ENCODE measurements at regions of chr19 and their contacts with region 1.

Region 1: DNA sequence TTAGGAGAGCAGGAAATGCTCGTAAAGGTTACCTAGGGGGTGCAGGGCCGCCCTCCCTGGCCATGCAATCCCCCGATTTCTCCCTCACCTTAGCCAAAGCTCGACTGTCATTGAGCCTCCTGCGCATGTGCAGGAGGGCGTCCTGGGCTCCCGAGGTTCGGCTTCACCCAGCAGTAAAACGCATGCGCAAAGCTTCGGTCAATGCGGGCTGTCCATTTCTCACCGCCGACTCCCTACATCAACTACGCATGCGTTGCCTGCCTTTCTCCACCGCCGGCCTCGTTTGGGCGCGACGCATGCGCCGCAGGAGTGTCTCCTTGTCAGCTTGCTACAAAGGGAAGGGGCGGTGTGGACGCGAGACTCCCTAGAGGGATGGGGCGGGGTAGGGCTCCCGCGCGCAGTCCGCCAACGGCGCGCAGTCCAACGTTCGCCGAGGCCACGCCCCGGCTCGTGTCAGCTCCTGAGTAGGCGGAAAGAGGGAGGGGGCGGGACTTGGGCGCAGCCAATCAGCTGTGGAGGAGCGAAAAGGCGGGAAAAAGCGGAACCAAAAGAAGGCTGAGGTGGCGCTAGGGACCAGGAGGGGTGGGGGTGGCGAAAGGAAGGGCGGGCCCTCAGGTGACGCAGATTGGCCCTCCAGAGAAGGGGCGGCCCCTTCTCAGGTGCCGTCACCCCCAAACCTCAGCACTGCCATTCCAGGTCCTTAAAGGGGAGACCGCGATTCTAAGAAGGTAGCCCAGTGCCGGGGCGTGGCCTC is at the starts of genes SYNGR4 and TMEM143:
- DNase-seq: peak; percentile 96 to 100 (median 98)
- ATAC-seq: peak; percentile 88
- H3K4me3 ChIP-seq: peak within 1 kb of the TSS; percentile 82 to 90
- H3K4me3 Mint-ChIP-seq: peak within 1 kb of the TSS; percentile 83
- H3K27ac ChIP-seq: peak within 1 kb of the TSS; percentile 64 to 89
- H3K27ac Mint-ChIP-seq: peak within 1 kb of the TSS; percentile 86
- H3K4me1 ChIP-seq: peaks cover 17% of the 10 kb centered on the region
- H3K4me1 Mint-ChIP-seq: peaks cover 19% of the 10 kb centered on the region
- H3K27me3 ChIP-seq: no peaks in the 10 kb centered on the region
- H3K27me3 Mint-ChIP-seq: no peaks in the 10 kb centered on the region
- CTCF ChIP-seq: no peak
- total RNA-seq, gene SYNGR4: not detected
- total RNA-seq, gene TMEM143: 6.4 to 7.7 TPM

Region 2: DNA sequence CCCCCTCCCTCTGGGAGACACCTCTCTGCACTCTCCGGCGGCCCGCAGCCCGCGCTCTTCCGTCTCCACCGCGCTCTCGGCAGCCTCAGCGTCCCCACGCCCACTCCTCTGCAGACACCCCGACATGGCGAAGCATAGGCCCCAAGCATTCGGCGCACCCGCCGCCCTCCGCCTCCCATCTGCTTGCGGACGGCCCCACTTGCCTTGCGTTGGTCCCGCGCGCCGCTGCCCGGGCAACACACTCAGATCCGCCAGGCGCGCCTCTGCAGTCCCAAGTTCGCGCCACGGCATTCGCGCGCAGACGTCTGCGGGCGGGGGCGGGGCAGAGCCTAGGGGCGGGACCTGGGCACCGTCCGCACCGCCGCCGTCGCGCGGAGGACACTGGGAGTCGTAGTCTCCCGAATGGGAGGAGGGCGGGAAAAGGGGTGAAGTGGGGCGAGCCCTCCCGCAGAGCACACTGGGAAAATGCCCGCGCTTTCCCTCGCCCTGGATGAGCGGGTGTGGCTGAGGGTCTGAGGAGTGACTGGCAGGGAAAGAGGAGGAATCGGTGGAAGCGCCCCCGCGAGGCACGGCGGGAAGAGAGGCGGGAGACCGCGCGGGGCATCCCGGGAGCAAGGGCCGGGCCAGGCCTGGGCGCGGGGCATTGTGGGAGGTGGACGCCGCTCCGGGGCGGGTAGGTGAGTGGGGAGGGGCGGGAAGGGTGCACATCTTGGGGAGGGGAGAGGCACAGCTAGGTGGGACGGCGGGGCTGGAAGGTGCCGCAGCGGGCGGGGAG is 193.8 kb before region 1 on chr19 and contains the starts of genes LIG1 and ZSWIM9:
- CTCF ChIA-PET with region 1: no interaction called
- POLR2A ChIA-PET with region 1: no interaction called
- intact Hi-C with region 1: loop called in 1 of 2 experiments (anchors 1 kb)
- DNase-seq: peak; percentile 82 to 95 (median 90)
- ATAC-seq: peak; percentile 81
- H3K4me3 ChIP-seq: peak within 1 kb of the TSS; percentile 96 to 100
- H3K4me3 Mint-ChIP-seq: peak within 1 kb of the TSS; percentile 98
- H3K27ac ChIP-seq: peak within 1 kb of the TSS; percentile 82 to 92
- H3K27ac Mint-ChIP-seq: peak within 1 kb of the TSS; percentile 97
- H3K4me1 ChIP-seq: peaks cover 7% of the 10 kb centered on the region
- H3K4me1 Mint-ChIP-seq: peaks cover 22% of the 10 kb centered on the region
- H3K27me3 ChIP-seq: no peaks in the 10 kb centered on the region
- H3K27me3 Mint-ChIP-seq: no peaks in the 10 kb centered on the region
- CTCF ChIP-seq: peak; percentile 25
- total RNA-seq, gene LIG1: 62.5 to 67.5 TPM
- total RNA-seq, gene ZSWIM9: 2.5 to 4.5 TPM

Region 3: DNA sequence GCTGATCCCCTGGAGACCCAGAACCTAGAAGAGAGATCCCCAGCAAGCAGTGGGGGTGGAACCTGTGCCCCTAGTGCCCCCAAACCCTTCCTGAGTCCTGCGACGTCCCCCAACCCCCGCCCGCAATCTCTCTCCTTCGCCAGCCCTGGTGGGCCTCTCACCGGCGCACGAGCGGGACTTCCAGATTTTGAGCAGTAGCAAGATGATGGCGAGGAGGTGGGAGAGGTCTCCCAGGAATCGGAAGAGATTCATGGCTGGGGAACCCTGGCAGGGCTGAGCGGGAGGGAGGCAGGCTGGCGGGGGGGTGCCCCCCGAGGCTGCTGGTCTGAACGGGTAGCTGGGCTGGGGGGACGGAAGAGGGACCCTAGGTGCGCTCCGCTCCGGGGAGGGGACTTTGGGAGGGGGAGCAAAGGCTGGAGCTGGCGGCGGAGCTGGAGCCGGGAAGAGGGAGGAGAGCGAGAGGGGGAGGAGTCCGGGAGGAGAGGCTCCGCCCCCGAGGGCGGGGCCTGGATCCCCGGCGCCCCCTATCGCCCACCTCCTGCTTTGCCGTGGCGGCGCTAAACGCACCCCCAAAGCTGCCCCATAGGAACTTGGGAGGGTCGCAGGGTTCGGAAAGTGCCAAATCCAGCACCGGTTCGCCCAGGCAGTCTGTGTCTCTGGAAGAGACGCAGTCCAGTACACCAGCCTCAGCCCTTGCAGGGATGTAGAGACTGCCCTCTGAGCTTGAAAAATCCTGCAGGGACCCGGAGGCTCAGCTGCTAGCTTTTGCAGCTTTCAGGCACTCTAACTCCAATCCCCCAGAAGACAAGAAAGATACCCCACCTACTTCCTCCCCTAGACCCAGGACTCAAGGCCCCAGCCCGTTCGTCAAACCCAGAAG is 27.4 kb after region 1 on chr19 and contains the start of gene KDELR1:
- CTCF ChIA-PET with region 1: interaction called, 9 read pairs
- POLR2A ChIA-PET with region 1: interaction called, 9 read pairs
- intact Hi-C with region 1: loop called (anchors 1 kb)
- DNase-seq: peak; percentile 53 to 86 (median 76)
- ATAC-seq: peak; percentile 85
- H3K4me3 ChIP-seq: peak within 1 kb of the TSS; percentile 75 to 81
- H3K4me3 Mint-ChIP-seq: peak within 1 kb of the TSS; percentile 92
- H3K27ac ChIP-seq: peak within 1 kb of the TSS; percentile 87 to 92
- H3K27ac Mint-ChIP-seq: peak within 1 kb of the TSS; percentile 95
- H3K4me1 ChIP-seq: peaks cover 37% of the 10 kb centered on the region
- H3K4me1 Mint-ChIP-seq: peaks cover 39% of the 10 kb centered on the region
- H3K27me3 ChIP-seq: peaks cover 24 to 31% of the 10 kb centered on the region in 2 experiments
- H3K27me3 Mint-ChIP-seq: peaks cover 15% of the 10 kb centered on the region
- CTCF ChIP-seq: peak; percentile 96
- total RNA-seq, gene KDELR1: 29.7 to 33.1 TPM

Region 4: DNA sequence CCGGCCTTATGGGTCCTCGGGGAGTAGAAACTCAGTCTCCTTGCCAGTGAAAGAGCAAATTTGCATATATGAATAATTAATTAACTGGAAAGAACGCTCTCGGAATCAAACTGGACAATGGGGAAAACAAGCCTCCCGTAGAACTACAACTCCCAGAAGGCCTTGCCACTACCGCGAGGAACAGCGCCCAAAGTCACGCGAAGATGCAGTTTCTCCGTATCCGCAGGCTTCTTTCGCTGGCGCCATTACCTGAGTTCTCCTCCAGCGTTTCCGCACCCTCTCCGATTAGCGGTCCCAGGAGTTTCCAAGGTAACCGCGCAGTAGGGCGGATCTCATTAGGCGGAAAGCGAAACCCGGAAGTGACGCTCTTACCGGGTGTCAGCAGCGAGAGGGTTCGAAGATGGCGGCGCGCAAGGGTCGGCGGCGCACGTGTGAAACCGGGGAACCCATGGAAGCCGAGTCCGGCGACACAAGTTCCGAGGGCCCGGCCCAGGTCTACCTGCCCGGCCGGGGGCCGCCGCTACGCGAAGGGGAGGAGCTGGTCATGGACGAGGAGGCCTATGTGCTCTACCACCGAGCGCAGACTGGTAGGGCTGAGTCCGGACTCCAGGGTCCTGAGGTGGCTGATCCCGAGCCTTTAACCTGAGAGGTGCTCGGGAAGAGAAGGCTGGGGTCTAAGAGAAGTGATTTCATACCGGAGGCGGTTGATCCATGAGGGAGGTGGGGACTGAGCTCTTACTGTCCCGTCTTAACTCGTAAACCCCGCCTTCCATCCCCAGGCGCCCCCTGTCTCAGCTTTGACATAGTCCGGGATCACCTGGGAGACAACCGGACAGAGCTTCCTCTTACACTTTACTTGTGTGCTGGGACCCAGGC is 81.9 kb after region 1 on chr19 and contains the start of gene GRWD1:
- CTCF ChIA-PET with region 1: no interaction called
- POLR2A ChIA-PET with region 1: no interaction called
- intact Hi-C with region 1: loop called (anchors 1 kb)
- DNase-seq: peak; percentile 83 to 98 (median 91)
- ATAC-seq: peak; percentile 93
- H3K4me3 ChIP-seq: peak within 1 kb of the TSS; percentile 82 to 90
- H3K4me3 Mint-ChIP-seq: peak within 1 kb of the TSS; percentile 93
- H3K27ac ChIP-seq: peak within 1 kb of the TSS; percentile 79 to 89
- H3K27ac Mint-ChIP-seq: peak within 1 kb of the TSS; percentile 95
- H3K4me1 ChIP-seq: peaks cover 24% of the 10 kb centered on the region
- H3K4me1 Mint-ChIP-seq: peaks cover 40% of the 10 kb centered on the region
- H3K27me3 ChIP-seq: peaks cover 19 to 22% of the 10 kb centered on the region in 2 experiments
- H3K27me3 Mint-ChIP-seq: peaks cover 18% of the 10 kb centered on the region
- CTCF ChIP-seq: no peak
- total RNA-seq, gene GRWD1: 36.1 to 41.7 TPM

Region 5: DNA sequence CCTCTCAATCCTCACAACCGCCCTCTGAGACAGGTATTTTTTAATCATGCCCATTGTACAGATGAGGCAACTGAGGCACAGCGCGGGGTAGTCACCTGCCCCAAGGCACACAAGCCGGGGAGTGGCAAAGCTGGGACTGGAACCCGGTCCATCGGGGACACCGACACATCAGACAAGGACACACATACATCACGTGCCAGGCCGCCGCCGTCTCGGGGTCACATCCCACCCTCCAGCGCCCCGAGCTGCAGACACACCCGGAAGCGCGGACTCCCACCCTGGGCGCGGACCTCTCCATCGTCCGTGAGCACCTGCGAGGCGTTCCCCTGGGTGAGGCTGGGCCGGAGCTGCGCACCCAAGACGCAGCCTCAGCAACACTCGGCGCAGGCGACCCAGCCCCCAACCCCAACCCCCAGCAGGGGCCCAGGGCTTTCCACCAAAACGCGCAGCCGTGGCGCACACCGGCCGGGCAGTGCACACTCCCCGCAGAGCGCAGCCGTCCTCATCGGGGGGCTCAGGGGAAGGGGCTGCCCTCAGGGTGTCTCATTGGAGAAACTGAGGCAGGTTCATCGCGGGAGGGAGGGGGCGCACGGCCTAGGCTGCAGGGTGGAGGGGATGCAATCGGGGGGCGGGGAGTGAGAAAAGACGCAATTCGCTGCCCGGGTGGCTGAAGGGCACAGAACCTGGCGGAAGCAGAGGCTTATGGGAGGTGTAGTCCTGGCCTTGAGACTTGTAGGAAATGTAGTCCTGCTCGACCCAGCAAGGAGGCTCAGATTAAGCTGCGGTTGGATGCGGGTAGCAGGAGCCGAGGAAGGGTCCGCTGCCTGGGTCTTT is 149.5 kb after region 1 on chr19:
- CTCF ChIA-PET with region 1: interaction called, 4 read pairs
- POLR2A ChIA-PET with region 1: no interaction called
- intact Hi-C with region 1: loop called (anchors 2 kb)
- DNase-seq: peak in 8 of 9 experiments; percentile 61 to 88 (median 78)
- ATAC-seq: peak; percentile 58
- H3K4me3 ChIP-seq: peak overlapping the region; percentile 78 to 88
- H3K4me3 Mint-ChIP-seq: no peak overlapping the region
- H3K27ac ChIP-seq: peak overlapping the region; percentile 68 to 71
- H3K27ac Mint-ChIP-seq: peak overlapping the region; percentile 93
- H3K4me1 ChIP-seq: peaks cover 23% of the 10 kb centered on the region
- H3K4me1 Mint-ChIP-seq: peaks cover 18% of the 10 kb centered on the region
- H3K27me3 ChIP-seq: no peaks in the 10 kb centered on the region
- H3K27me3 Mint-ChIP-seq: no peaks in the 10 kb centered on the region
- CTCF ChIP-seq: no peak

Region 6: GRCh38 chr19:49817964-49818648 is 1454.1 kb after region 1 on chr19 and contains the start of gene MED25:
- CTCF ChIA-PET with region 1: no interaction called
- POLR2A ChIA-PET with region 1: no interaction called
- intact Hi-C with region 1: loop called in 1 of 2 experiments (anchors 5 kb)
- DNase-seq: peak; percentile 78 to 94 (median 87)
- ATAC-seq: peak; percentile 64
- H3K4me3 ChIP-seq: peak within 1 kb of the TSS; percentile 85 to 91
- H3K4me3 Mint-ChIP-seq: peak within 1 kb of the TSS; percentile 99
- H3K27ac ChIP-seq: peak within 1 kb of the TSS; percentile 95 to 98
- H3K27ac Mint-ChIP-seq: peak within 1 kb of the TSS; percentile 100
- H3K4me1 ChIP-seq: peaks cover 13% of the 10 kb centered on the region
- H3K4me1 Mint-ChIP-seq: peaks cover 30% of the 10 kb centered on the region
- H3K27me3 ChIP-seq: no peaks in the 10 kb centered on the region
- H3K27me3 Mint-ChIP-seq: no peaks in the 10 kb centered on the region
- CTCF ChIP-seq: peak; percentile 19
- total RNA-seq, gene MED25: 41.9 to 42.1 TPM

Measured in CD8-positive, alpha-beta T cell (primary cell).